ENCODE measurements at regions of chr1 and their contacts with region 1.

Region 1: DNA sequence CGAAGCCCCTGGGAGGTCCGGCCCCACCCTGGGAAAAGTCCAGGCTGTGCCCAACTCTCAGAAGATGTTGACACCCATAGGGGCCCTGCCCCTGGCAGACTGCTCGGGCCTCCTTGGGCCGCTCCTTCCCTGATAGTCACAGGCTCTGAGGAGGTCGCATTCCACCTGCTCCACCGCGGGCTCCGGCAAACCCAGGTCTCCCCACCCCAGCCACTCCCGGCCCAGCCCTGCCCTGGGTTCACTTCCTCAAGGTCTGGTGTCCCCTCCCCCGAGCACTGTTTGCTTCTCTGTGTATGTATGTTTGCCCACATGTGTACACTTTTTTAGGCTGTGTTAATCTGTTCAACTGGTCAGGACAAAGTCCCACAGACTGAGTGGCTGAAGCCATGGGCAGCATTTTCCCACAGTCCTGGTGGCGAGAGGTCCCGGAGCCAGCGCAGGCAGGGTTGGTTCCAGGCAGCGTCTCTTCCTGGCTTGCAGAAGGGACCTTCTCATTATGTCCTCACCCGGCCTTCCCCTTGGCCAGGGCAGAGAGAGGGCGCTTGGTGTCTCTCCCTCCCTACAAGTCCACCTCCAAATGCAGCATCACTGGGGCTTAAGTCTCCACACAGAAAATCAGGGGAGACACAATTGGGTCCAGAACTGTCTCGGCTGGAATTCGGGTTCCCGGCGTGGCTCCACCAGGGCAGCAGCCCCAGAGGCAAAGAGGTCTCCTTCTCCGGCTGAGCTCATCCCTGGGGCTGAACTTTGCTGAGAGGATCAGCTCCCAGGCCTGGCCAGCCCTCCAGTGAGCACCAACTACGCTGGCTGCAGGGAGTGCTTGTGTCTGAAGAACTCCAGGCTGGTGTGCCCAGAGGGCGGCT is 10.5 kb upstream of the PRXL2B start:
- DNase-seq: no peak
- ATAC-seq: no peak
- H3K4me3 Mint-ChIP-seq: no peak overlapping the region
- H3K27ac Mint-ChIP-seq: no peak overlapping the region
- H3K4me1 Mint-ChIP-seq: peaks cover 43% of the 10 kb centered on the region
- H3K27me3 Mint-ChIP-seq: peaks cover 3% of the 10 kb centered on the region

Region 2: GRCh38 chr1:2561898-2562545 is 14.0 kb before region 1 on chr1:
- CTCF ChIA-PET with region 1: interaction called, 32 read pairs
- DNase-seq: no peak
- ATAC-seq: no peak
- H3K4me3 Mint-ChIP-seq: no peak overlapping the region
- H3K27ac Mint-ChIP-seq: no peak overlapping the region
- H3K4me1 Mint-ChIP-seq: peaks cover 15% of the 10 kb centered on the region
- H3K27me3 Mint-ChIP-seq: no peaks in the 10 kb centered on the region

Region 3: DNA sequence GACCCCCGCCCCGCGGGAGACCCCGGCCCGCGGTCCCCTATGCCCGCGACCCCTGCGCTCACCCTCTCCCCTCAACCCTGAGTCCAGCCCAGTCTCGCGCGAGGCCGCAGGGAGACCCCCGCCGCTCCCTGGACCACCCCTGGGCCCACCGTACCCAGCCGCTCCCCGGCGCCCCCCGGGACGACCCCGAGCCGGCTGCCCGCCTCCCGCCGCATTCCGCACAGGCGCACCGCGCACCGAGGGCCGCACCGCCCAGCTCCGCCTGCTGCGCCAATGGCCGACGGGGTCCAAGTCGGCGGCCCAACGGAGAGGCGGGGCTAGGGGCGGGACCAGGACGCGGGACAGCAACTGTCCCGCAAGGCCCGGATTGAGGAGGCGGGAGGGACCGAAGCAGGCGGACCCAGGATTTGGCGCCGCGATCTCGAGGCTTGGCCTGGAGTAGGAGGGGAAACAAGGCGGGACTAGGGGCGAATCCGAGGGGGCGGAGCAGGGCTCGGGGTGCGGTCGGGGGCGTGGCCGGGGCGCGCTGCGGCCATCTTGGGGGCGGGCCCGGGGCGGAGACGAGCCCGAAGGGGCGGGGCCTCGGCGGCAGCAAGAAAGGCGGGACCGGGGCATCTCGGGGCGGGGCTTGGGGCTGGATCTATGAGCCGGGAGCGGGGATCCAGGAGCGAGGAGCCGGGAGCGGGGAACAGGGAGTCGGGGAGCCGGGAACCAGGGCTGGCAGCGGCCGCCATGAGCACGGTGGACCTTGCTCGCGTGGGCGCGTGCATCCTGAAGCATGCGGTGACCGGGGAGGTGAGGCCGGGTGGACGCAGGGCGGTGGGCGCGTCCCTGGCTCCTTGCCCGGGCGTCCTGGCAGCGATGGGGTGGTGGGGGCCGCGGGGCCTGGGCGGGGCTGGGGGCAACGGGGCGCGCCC is 10.4 kb after region 1 on chr1 and contains the start of gene PRXL2B:
- CTCF ChIA-PET with region 1: interaction called, 14 read pairs
- DNase-seq: peak; percentile 99
- ATAC-seq: peak; percentile 82
- H3K4me3 Mint-ChIP-seq: peak within 1 kb of the TSS; percentile 82
- H3K27ac Mint-ChIP-seq: peak within 1 kb of the TSS; percentile 93
- H3K4me1 Mint-ChIP-seq: peaks cover 35% of the 10 kb centered on the region
- H3K27me3 Mint-ChIP-seq: no peaks in the 10 kb centered on the region
- total RNA-seq, gene PRXL2B: 22.4 to 26.2 TPM

Measured in activated CD8-positive, alpha-beta memory T cell treated with anti-CD3 and anti-CD28 coated beads, Interleukin-2, amount 10 ng/mL, durations not matched to agents 7 days and 5 days (primary cell).